BJ (cell line): ENCODE measurements at regions of chr7 and their contacts with region 1.

Region 1: DNA sequence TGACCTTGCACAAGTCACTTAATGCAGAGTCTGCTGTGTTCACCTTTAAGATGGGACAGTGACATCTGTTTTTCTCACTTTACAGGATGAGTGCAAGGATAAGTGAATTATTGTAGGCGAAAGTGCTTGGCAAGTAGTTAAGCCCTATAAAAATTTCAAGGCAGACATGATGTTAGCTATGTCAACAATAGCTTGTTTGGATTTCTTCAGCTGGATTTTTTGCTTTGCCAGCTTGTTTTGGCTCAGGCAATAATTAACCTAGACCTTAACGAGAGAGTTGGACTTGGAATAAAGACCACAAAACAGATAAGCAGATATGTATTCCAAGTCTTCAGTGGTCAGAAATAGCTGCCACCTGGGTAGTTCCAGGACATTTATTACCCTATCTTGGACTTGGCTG is 255.2 kb downstream of the ARL4A start:
- DNase-seq: no peak
- H3K4me3 ChIP-seq: no peak overlapping the region
- H3K27me3 ChIP-seq: no peaks in the 10 kb centered on the region
- CTCF ChIP-seq: no peak

Region 2: GRCh38 chr7:12741951-12742575 is 200.5 kb before region 1 on chr7:
- CTCF ChIA-PET with region 1: no interaction called
- POLR2A ChIA-PET with region 1: no interaction called
- DNase-seq: no peak
- H3K4me3 ChIP-seq: no peak overlapping the region
- H3K27me3 ChIP-seq: no peaks in the 10 kb centered on the region
- CTCF ChIP-seq: no peak

Region 3: GRCh38 chr7:12895296-12895695 is 47.3 kb before region 1 on chr7:
- CTCF ChIA-PET with region 1: no interaction called
- POLR2A ChIA-PET with region 1: interaction called, 14 read pairs
- DNase-seq: peak; percentile 43
- H3K4me3 ChIP-seq: no peak overlapping the region
- H3K27me3 ChIP-seq: no peaks in the 10 kb centered on the region
- CTCF ChIP-seq: no peak